HAP-1 (cell line): ENCODE measurements at regions of chr2 and their contacts with region 1.

Region 1: DNA sequence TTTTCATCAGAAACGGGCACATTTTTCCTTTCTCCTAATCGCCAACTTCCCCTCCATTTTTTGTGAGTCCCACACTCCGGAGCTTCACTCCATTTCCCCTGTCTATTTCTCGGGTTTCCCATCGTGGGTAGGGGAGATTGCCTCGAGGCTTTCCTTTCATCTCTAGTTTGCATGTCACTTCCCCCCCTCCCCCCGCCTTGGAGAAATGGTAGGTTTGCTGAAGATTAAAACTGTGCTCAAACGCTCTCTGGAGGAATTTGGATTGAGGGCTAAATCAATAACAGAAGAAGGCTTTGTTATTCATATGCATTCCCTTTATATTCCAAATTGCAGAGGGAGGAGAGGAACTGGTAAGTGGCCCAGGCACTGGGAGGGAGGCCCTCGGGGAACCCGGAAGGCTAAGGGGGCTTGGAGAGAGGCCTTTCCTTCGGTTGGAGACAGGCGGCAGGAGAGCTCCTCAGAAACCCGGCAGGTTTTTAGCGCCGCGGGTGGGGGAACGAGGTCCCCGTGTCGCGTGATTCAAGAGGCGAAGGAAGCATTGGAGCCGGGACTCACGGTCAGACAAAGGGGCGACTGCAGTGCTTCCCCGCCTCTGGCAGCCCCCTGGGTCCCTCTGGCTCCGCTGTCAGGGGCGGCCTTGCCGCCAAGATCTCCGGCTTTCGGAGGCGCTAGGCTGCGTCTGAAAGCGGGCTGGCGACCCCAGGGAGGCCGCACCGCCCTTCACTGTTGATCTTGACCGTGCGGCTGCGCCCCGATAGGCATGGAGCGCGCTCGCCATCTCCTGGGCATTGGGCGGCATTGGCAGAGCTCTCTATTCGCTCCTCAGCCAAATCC is 2.4 kb upstream of the HOXD12 start:
- DNase-seq: peak; percentile 93 to 99
- H3K4me3 ChIP-seq: peak overlapping the region; percentile 37
- H3K4me1 ChIP-seq: peaks cover 30% of the 10 kb centered on the region
- H3K27me3 ChIP-seq: no peaks in the 10 kb centered on the region

Region 2: GRCh38 chr2:174697255-174697654 is 1399.9 kb before region 1 on chr2:
- in situ Hi-C with region 1: loop called (anchors 25 kb)
- DNase-seq: peak; percentile 65 to 82
- H3K4me3 ChIP-seq: no peak overlapping the region
- H3K4me1 ChIP-seq: no peaks in the 10 kb centered on the region
- H3K27me3 ChIP-seq: peaks cover 8% of the 10 kb centered on the region; the same call in 1 of the 2 replicates

Region 3: DNA sequence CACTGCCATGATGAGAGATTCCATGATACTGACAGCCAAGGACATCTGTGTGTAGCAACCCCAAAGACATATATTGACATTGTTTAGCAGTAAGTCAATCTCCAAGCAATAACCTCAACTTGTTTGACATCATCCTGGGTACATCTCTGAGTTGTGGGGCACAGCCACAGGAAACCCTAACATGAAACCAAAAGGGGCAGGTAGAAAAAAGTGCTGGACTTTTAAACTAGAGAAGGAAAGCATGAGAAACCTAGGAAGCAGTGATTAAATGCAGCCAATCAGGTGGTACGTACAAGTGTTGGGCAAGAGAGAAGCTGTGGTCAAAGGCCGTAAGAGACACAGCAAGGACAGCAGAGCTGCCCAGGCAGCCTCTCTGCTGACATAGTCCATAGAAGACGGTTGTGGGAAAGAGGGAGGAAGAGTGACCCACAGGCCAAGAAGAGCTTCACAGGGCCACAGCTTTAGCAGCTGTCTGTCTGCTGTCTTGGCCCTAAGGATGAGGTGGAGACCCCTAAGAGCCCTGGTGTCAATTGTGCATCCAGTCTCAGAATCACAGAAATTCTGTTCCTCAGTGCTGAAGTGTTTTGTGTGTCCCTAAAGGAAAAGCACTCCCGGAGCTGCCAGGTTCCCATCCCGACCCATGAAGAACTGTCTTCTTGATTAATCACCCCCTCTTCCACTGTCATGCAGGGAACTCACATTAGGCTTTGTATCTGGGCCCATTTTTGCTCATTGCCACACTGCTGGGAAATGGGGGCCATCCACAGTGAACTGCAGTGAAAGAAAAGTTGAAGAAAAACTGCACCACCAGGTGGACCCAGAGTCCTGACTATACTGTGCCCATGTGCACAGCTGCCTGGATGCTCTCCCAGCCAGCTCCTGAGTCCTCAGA is 1066.6 kb before region 1 on chr2:
- in situ Hi-C with region 1: loop called (anchors 25 kb)
- DNase-seq: peak; percentile 27 to 63
- H3K4me3 ChIP-seq: no peak overlapping the region
- H3K4me1 ChIP-seq: peaks cover 8% of the 10 kb centered on the region
- H3K27me3 ChIP-seq: no peaks in the 10 kb centered on the region

Region 4: DNA sequence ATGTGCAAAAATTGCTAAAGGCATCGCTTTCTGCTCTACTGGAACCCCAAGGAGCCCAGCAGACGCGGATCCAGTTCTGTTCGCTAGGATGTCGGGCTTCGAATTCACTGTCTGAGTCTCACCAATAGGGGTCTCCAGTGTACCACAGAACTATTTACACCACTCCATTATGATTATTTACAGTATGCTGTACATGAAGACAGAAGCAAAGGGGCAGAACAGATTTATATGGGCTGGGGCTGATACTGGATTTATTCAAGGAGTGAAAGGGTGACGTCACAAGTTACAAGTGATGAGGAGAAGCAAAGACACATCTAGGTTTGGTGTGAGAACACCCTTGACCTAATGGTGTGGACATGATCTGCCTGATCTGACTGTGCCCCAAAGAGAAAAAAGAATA is 730.4 kb before region 1 on chr2:
- in situ Hi-C with region 1: loop called (anchors 10 kb)
- DNase-seq: peak; percentile 61
- H3K4me3 ChIP-seq: no peak overlapping the region
- H3K4me1 ChIP-seq: no peaks in the 10 kb centered on the region
- H3K27me3 ChIP-seq: peaks cover 30% of the 10 kb centered on the region

Region 5: GRCh38 chr2:175676813-175677212 is 420.4 kb before region 1 on chr2:
- in situ Hi-C with region 1: no loop called
- DNase-seq: no peak
- H3K4me3 ChIP-seq: no peak overlapping the region
- H3K4me1 ChIP-seq: no peaks in the 10 kb centered on the region
- H3K27me3 ChIP-seq: no peaks in the 10 kb centered on the region

Region 6: GRCh38 chr2:175690113-175690837 is 406.9 kb before region 1 on chr2:
- in situ Hi-C with region 1: loop called (anchors 5 kb)
- DNase-seq: peak; percentile 55 to 64
- H3K4me3 ChIP-seq: no peak overlapping the region
- H3K4me1 ChIP-seq: peaks cover 5% of the 10 kb centered on the region
- H3K27me3 ChIP-seq: peaks cover 8% of the 10 kb centered on the region